CD4-positive, alpha-beta memory T cell (primary cell): ENCODE measurements at regions of chr17 and their contacts with region 1.

Region 1: GRCh38 chr17:57597531-57598453 is 147.3 kb downstream of the CCDC182 start:
- DNase-seq: peak in 2 of 5 donors; percentile 16 to 21
- H3K4me3 ChIP-seq: no peak overlapping the region
- H3K4me3 Mint-ChIP-seq: peak overlapping the region in 3 of 8 donors; percentile 44 to 65 (median 61)
- H3K27ac ChIP-seq: no peak overlapping the region
- H3K27ac Mint-ChIP-seq: peak overlapping the region; percentile 53 to 96 (median 88)
- H3K4me1 ChIP-seq: peaks cover 54% of the 10 kb centered on the region
- H3K4me1 Mint-ChIP-seq: peaks cover 44 to 62% (median 51%) of the 10 kb centered on the region in 4 donors
- H3K27me3 ChIP-seq: no peaks in the 10 kb centered on the region
- H3K27me3 Mint-ChIP-seq: no peaks in the 10 kb centered on the region

Region 2: GRCh38 chr17:57612202-57613071 is 14.6 kb after region 1 on chr17:
- CTCF ChIA-PET with region 1: interaction called, 22 read pairs
- POLR2A ChIA-PET with region 1: interaction called, 6 read pairs
- intact Hi-C with region 1: no loop called
- DNase-seq: peak; percentile 54 to 76 (median 73)
- H3K4me3 ChIP-seq: no peak overlapping the region
- H3K4me3 Mint-ChIP-seq: peak overlapping the region in 5 of 8 donors; percentile 24 to 72 (median 52)
- H3K27ac ChIP-seq: peak overlapping the region; percentile 35
- H3K27ac Mint-ChIP-seq: peak overlapping the region in 6 of 7 donors; percentile 78 to 92 (median 88)
- H3K4me1 ChIP-seq: peaks cover 37% of the 10 kb centered on the region
- H3K4me1 Mint-ChIP-seq: peaks cover 4 to 31% (median 21%) of the 10 kb centered on the region in 4 donors
- H3K27me3 ChIP-seq: no peaks in the 10 kb centered on the region
- H3K27me3 Mint-ChIP-seq: no peaks in the 10 kb centered on the region

Region 3: GRCh38 chr17:57662644-57663308 is 65.0 kb after region 1 on chr17:
- CTCF ChIA-PET with region 1: interaction called, 14 read pairs
- POLR2A ChIA-PET with region 1: interaction called, 3 read pairs
- intact Hi-C with region 1: no loop called
- DNase-seq: peak; percentile 10 to 49 (median 39)
- H3K4me3 ChIP-seq: no peak overlapping the region
- H3K4me3 Mint-ChIP-seq: peak overlapping the region in 4 of 8 donors; percentile 11 to 66 (median 44)
- H3K27ac ChIP-seq: no peak overlapping the region
- H3K27ac Mint-ChIP-seq: peak overlapping the region in 2 of 7 donors; percentile 23 to 64
- H3K4me1 ChIP-seq: no peaks in the 10 kb centered on the region
- H3K4me1 Mint-ChIP-seq: peaks cover 0 to 6% (median 4%) of the 10 kb centered on the region in 4 donors
- H3K27me3 ChIP-seq: no peaks in the 10 kb centered on the region
- H3K27me3 Mint-ChIP-seq: no peaks in the 10 kb centered on the region

Region 4: GRCh38 chr17:57739402-57740392 is 141.9 kb after region 1 on chr17:
- CTCF ChIA-PET with region 1: interaction called, 8 read pairs
- POLR2A ChIA-PET with region 1: no interaction called
- intact Hi-C with region 1: loop called (anchors 1 kb)
- DNase-seq: peak in 4 of 5 donors; percentile 2 to 15 (median 6)
- H3K4me3 ChIP-seq: no peak overlapping the region
- H3K4me3 Mint-ChIP-seq: no peak overlapping the region
- H3K27ac ChIP-seq: no peak overlapping the region
- H3K27ac Mint-ChIP-seq: no peak overlapping the region
- H3K4me1 ChIP-seq: no peaks in the 10 kb centered on the region
- H3K4me1 Mint-ChIP-seq: peaks cover 0 to 6% (median 2%) of the 10 kb centered on the region in 4 donors
- H3K27me3 ChIP-seq: no peaks in the 10 kb centered on the region
- H3K27me3 Mint-ChIP-seq: peaks cover 0 to 7% of the 10 kb centered on the region in 2 donors

Region 5: DNA sequence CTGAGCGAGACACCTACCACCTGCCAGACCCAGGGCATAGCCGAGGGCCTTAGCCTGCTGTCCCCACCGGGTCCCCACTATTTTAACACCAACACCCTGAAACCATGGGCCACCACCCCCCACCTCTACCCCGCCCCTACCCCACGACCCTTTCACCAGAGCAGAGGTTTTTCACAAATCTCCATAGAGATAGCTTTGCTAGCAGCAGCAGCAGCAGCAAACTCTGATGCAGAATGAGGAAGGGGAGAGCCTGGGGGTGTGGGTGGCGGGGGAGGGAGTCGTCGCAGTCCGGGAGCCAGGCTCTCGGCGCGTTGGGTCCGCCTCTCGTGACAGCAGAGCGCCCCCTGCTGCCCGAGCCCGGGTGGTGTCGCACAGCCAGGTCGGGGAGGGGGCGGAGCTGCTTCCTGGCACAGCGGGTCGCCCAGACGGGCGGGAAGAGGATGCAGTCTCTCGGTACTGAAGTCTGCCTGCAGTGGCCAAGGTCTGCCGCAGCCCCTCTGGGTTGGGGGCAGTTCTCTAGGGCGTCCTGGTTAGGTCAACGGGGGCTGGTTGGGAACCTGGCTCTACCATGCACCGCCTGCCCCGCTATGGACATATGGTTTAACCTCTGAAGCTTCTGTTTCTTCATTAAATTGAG is 185.4 kb after region 1 on chr17:
- CTCF ChIA-PET with region 1: interaction called, 15 read pairs
- POLR2A ChIA-PET with region 1: no interaction called
- intact Hi-C with region 1: no loop called
- DNase-seq: peak; percentile 58 to 66 (median 64)
- H3K4me3 ChIP-seq: no peak overlapping the region
- H3K4me3 Mint-ChIP-seq: peak overlapping the region in 2 of 8 donors; percentile 2 to 23
- H3K27ac ChIP-seq: no peak overlapping the region
- H3K27ac Mint-ChIP-seq: no peak overlapping the region
- H3K4me1 ChIP-seq: peaks cover 11% of the 10 kb centered on the region
- H3K4me1 Mint-ChIP-seq: peaks cover 0 to 2% (median 0%) of the 10 kb centered on the region in 4 donors
- H3K27me3 ChIP-seq: peaks cover 8% of the 10 kb centered on the region
- H3K27me3 Mint-ChIP-seq: peaks cover 20 to 25% of the 10 kb centered on the region in 2 donors